SK-N-SH (cell line): ENCODE measurements at regions of chr12 and their contacts with region 1.

Region 1: DNA sequence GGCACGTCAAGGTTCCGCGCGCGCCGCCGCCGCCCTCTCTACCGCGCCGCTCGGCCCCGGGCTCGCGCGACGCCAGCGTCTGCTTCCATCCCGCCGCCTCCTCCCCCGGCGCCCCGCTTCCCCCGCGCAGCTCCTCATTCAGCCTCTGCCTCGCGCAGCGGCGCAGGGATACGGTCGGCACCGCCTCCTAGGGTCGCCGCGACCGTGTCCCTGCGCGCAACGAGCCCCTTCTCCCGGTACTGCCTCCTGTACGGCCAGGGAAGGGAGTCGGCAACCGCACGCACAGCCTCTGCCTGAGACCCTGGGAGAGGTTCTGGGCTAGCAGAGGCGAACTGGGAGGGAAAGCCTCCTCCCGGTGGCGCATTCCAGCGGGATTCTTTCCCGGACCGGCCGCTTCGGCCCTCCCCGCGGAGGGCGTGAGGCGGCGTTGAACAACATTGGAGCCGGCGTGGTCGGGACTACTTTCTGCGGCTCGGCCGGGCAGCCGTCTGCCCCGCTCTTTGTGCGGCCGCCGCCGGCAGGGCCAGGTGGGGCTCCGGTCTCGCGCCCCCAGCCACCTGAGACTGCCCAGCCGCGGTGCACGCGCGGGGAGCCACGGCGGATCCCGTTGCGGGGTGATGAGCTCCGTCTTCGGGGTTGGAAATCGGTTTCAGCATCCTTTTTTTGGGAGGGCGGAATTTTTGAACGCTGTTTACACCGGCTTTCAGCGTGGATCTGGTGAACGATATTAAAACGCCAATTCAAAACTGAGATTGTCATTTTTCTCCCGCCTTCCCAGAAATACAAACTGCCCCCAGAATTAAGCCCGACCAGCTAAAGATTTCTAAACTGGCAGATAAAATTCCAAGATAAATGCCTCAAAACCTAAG is at the start of gene LRP6:
- DNase-seq: peak; percentile 96
- H3K4me3 ChIP-seq: peak within 1 kb of the TSS; percentile 71 to 99
- H3K27ac ChIP-seq: peak within 1 kb of the TSS; percentile 97 to 98
- H3K4me1 ChIP-seq: peaks cover 5 to 9% of the 10 kb centered on the region in 2 experiments; a peak in 3 of 4 replicates
- H3K27me3 ChIP-seq: no peaks in the 10 kb centered on the region
- CTCF ChIP-seq: no peak
- EP300 ChIP-seq: no peak
- RAD21 ChIP-seq: no peak; the same call in 1 of the 2 replicates
- polyA plus RNA-seq, gene LRP6: 13.7 and 15.3 TPM in 2 replicates

Region 2: DNA sequence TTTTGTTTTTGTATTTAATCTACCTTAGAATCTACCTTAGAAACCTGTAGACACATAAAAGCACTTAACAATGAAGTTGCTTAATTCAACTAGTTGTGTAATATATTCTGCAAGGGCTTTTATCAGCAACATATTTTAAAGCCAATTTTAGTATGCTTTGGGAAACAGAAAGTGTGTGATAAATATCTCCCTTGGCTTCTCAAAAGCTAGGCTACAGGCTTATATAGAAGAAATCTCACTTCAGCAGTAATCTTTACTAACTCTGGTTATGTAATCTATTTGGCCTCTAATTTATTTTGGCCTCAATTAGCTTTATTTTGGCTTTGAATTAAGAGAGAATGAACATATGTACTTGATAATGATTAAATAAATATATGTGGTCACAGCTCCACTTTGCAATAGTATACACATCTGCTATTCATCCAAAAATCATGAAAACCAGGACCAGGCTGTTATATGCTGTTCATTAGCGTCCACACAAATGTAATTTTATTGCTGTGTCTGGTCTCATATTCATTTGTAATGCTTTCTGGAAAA is 37.5 kb before region 1 on chr12:
- CTCF ChIA-PET with region 1: interaction called, 3 read pairs
- POLR2A ChIA-PET with region 1: interaction called, 13 read pairs
- DNase-seq: peak; percentile 69
- H3K4me3 ChIP-seq: no peak overlapping the region
- H3K27ac ChIP-seq: peak overlapping the region; percentile 20 to 80; a peak in 3 of 4 replicates
- H3K4me1 ChIP-seq: peaks cover 19 to 20% of the 10 kb centered on the region in 2 experiments; a peak in 3 of 4 replicates
- H3K27me3 ChIP-seq: no peaks in the 10 kb centered on the region
- CTCF ChIP-seq: no peak
- EP300 ChIP-seq: peak in 1 of 2 experiments; percentile 88; a peak in 2 of 4 replicates
- RAD21 ChIP-seq: no peak; the same call in 1 of the 2 replicates

Region 3: GRCh38 chr12:12240662-12241340 is 26.3 kb before region 1 on chr12:
- CTCF ChIA-PET with region 1: interaction called, 12 read pairs
- POLR2A ChIA-PET with region 1: interaction called, 3 read pairs
- DNase-seq: peak; percentile 18
- H3K4me3 ChIP-seq: no peak overlapping the region
- H3K27ac ChIP-seq: peak overlapping the region; percentile 27 to 34; a peak in 2 of 4 replicates
- H3K4me1 ChIP-seq: peaks cover 0 to 17% of the 10 kb centered on the region in 2 experiments; a peak in 2 of 4 replicates
- H3K27me3 ChIP-seq: no peaks in the 10 kb centered on the region
- CTCF ChIP-seq: no peak
- EP300 ChIP-seq: no peak
- RAD21 ChIP-seq: no peak

Region 4: GRCh38 chr12:13154027-13154538 is 887.0 kb after region 1 on chr12:
- CTCF ChIA-PET with region 1: no interaction called
- POLR2A ChIA-PET with region 1: no interaction called
- DNase-seq: no peak
- H3K4me3 ChIP-seq: no peak overlapping the region
- H3K27ac ChIP-seq: peak overlapping the region in 1 of 2 experiments; percentile 46; a peak in 2 of 4 replicates
- H3K4me1 ChIP-seq: peaks cover 0 to 13% of the 10 kb centered on the region in 2 experiments; a peak in 1 of 4 replicates
- H3K27me3 ChIP-seq: no peaks in the 10 kb centered on the region
- CTCF ChIP-seq: no peak
- EP300 ChIP-seq: no peak
- RAD21 ChIP-seq: no peak